ENCODE measurements at regions of chr3 and their contacts with region 1.

Region 1: GRCh38 chr3:48240711-48241491 is at the start of gene ZNF589:
- DNase-seq: peak; percentile 87 to 96
- ATAC-seq: peak; percentile 97 to 99 (median 98)
- H3K4me3 ChIP-seq: peak within 1 kb of the TSS; percentile 57
- H3K4me3 Mint-ChIP-seq: peak within 1 kb of the TSS; percentile 91
- H3K27ac ChIP-seq: peak within 1 kb of the TSS; percentile 66
- H3K27ac Mint-ChIP-seq: peak within 1 kb of the TSS; percentile 88 to 93
- H3K4me1 ChIP-seq: peaks cover 13% of the 10 kb centered on the region
- H3K4me1 Mint-ChIP-seq: peaks cover 10 to 14% of the 10 kb centered on the region in 2 donors
- H3K27me3 ChIP-seq: no peaks in the 10 kb centered on the region
- H3K27me3 Mint-ChIP-seq: no peaks in the 10 kb centered on the region
- CTCF ChIP-seq: peak; percentile 25
- total RNA-seq, gene ZNF589: 16.3 to 26.6 (median 21.4) TPM

Region 2: DNA sequence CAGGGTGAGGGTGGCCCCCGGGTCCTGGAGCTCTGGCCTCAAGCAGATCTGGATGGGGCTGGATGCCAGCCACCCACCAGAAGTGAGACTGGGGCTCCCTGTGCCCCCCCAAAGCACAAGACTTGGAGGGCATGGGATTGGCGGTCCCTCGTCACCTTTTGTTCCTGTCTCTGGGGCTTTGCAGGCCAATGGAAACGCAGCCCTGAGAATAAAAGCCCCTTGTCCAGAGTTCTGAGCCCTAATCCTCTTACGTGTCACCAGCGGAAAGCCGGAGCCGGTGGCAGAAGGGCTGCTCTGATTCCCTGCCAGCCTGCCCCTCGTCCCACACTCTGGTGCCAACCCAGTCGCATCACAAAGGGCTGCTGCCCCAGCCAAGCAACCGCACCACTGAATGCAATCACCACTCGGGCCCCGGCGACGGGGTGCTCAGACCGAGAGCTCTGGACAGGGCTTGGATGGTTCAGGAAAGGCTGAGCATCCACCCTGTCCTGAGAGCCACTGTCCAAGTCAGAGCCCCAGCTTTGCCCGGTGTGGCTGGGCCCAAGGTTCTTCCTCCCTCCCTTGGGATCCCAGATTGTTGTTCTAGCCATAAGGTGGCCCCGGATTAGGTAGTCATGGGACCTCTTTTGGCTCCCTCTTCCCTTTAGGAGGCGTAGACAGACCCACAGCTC is 704.5 kb before region 1 on chr3:
- intact Hi-C with region 1: no loop called
- DNase-seq: no peak
- ATAC-seq: no peak
- H3K4me3 ChIP-seq: no peak overlapping the region
- H3K4me3 Mint-ChIP-seq: no peak overlapping the region
- H3K27ac ChIP-seq: no peak overlapping the region
- H3K27ac Mint-ChIP-seq: peak overlapping the region in 1 of 2 donors; percentile 14
- H3K4me1 ChIP-seq: no peaks in the 10 kb centered on the region
- H3K4me1 Mint-ChIP-seq: peaks cover 0 to 5% of the 10 kb centered on the region in 2 donors
- H3K27me3 ChIP-seq: no peaks in the 10 kb centered on the region
- H3K27me3 Mint-ChIP-seq: peaks cover 0 to 3% of the 10 kb centered on the region in 2 donors
- CTCF ChIP-seq: no peak

Region 3: GRCh38 chr3:48188266-48189201 is 52.4 kb before region 1 on chr3 and contains the start of gene CDC25A:
- intact Hi-C with region 1: loop called (anchors 1 kb)
- DNase-seq: peak; percentile 83 to 96
- ATAC-seq: peak; percentile 98 to 100 (median 98)
- H3K4me3 ChIP-seq: peak within 1 kb of the TSS; percentile 78
- H3K4me3 Mint-ChIP-seq: peak within 1 kb of the TSS; percentile 96
- H3K27ac ChIP-seq: peak within 1 kb of the TSS; percentile 47
- H3K27ac Mint-ChIP-seq: peak within 1 kb of the TSS; percentile 68 to 72
- H3K4me1 ChIP-seq: peaks cover 13% of the 10 kb centered on the region
- H3K4me1 Mint-ChIP-seq: peaks cover 15 to 18% of the 10 kb centered on the region in 2 donors
- H3K27me3 ChIP-seq: no peaks in the 10 kb centered on the region
- H3K27me3 Mint-ChIP-seq: peaks cover 0 to 8% of the 10 kb centered on the region in 2 donors
- CTCF ChIP-seq: no peak
- total RNA-seq, gene CDC25A: 0.56 to 1.3 (median 0.72) TPM

Region 4: GRCh38 chr3:48301020-48301796 is 60.3 kb after region 1 on chr3:
- intact Hi-C with region 1: loop called (anchors 2 kb)
- DNase-seq: peak; percentile 91 to 92
- ATAC-seq: peak; percentile 91 to 95 (median 92)
- H3K4me3 ChIP-seq: peak within 1 kb of the TSS; percentile 85
- H3K4me3 Mint-ChIP-seq: peak within 1 kb of the TSS; percentile 98
- H3K27ac ChIP-seq: peak within 1 kb of the TSS; percentile 92
- H3K27ac Mint-ChIP-seq: peak within 1 kb of the TSS; percentile 90 to 98
- H3K4me1 ChIP-seq: peaks cover 38% of the 10 kb centered on the region
- H3K4me1 Mint-ChIP-seq: peaks cover 48 to 53% of the 10 kb centered on the region in 2 donors
- H3K27me3 ChIP-seq: no peaks in the 10 kb centered on the region
- H3K27me3 Mint-ChIP-seq: peaks cover 0 to 8% of the 10 kb centered on the region in 2 donors
- CTCF ChIP-seq: no peak